ENCODE measurements at regions of chr6 and their contacts with region 1.

Region 1: GRCh38 chr6:70884074-70884983 is 72.5 kb downstream of the B3GAT2 start:
- DNase-seq: peak; percentile 71
- ATAC-seq: peak; percentile 91
- H3K4me3 Mint-ChIP-seq: no peak overlapping the region
- H3K27ac Mint-ChIP-seq: no peak overlapping the region
- H3K4me1 Mint-ChIP-seq: no peaks in the 10 kb centered on the region
- H3K27me3 Mint-ChIP-seq: peaks cover 2% of the 10 kb centered on the region

Region 2: GRCh38 chr6:70310063-70310694 is 574.1 kb before region 1 on chr6:
- CTCF ChIA-PET with region 1: interaction called, 10 read pairs
- POLR2A ChIA-PET with region 1: no interaction called
- DNase-seq: no peak
- ATAC-seq: no peak
- H3K4me3 Mint-ChIP-seq: no peak overlapping the region
- H3K27ac Mint-ChIP-seq: no peak overlapping the region
- H3K4me1 Mint-ChIP-seq: no peaks in the 10 kb centered on the region
- H3K27me3 Mint-ChIP-seq: peaks cover 20% of the 10 kb centered on the region

Region 3: DNA sequence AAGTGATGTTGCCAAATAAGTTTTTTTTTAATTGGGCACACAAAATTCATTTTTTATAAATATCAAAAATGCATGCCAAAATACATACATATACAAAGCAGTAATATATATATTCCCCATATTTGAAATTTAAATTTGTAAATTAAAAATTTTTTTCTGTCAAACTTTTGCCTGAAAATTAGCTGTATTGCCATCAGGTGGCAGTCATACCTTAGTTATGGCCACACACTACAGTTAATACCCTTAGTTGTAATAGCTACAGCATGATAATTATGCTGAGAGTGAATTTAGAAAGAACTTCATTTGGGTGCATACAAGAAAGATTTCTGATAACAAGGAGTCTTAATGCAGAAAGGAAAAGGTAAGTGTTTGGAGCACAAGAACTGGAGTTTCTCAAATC is 363.8 kb before region 1 on chr6:
- CTCF ChIA-PET with region 1: interaction called, 22 read pairs
- POLR2A ChIA-PET with region 1: no interaction called
- DNase-seq: peak; percentile 33
- ATAC-seq: no peak
- H3K4me3 Mint-ChIP-seq: no peak overlapping the region
- H3K27ac Mint-ChIP-seq: no peak overlapping the region
- H3K4me1 Mint-ChIP-seq: peaks cover 7% of the 10 kb centered on the region
- H3K27me3 Mint-ChIP-seq: no peaks in the 10 kb centered on the region

Region 4: DNA sequence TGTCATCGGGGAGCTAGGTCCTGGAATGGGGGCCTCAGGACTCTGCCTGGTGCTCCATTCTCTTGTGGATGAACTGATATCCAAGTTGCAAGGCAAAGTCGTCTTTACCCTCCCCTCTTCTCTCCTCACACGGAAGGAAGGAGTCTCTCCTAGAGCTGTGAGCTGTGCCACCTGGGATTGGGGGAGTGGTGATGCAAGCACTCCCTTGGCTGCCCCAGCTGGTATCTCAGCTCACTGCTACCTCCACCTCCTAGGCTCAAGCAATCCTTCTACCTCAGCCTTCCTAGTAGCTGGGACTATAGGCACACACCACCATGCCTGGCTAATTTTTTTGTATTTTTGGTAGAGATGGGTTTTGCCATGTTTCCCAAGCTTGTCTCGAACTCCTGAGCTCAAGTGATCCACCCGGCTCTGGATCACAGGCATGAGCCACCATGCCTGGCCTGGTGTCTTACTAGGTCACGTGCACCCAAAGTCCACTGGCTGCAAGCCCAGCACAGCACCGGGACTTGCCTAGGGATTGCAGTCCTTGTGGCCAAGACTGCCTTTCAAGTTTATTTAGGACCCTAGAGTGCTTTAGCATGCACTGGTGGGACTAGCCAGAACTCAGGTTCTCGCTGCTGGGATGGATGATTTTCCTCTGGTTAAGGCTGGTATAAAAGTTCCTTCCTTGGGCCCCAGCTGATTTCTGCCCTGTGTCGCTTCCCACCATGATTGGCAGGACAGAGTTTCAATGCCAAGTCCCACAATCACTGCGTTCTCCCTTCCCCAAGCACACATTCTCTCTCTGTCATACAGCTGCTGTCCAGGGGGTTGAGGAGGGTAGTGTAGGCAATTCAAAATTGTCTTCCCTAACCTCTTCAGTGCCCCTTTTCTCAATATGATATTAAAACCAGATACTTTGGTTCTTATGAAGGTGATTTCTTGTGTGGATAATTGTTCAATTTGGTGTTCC is 183.1 kb before region 1 on chr6:
- CTCF ChIA-PET with region 1: interaction called, 14 read pairs
- POLR2A ChIA-PET with region 1: no interaction called
- DNase-seq: no peak
- ATAC-seq: no peak
- H3K4me3 Mint-ChIP-seq: no peak overlapping the region
- H3K27ac Mint-ChIP-seq: no peak overlapping the region
- H3K4me1 Mint-ChIP-seq: no peaks in the 10 kb centered on the region
- H3K27me3 Mint-ChIP-seq: no peaks in the 10 kb centered on the region

Region 5: DNA sequence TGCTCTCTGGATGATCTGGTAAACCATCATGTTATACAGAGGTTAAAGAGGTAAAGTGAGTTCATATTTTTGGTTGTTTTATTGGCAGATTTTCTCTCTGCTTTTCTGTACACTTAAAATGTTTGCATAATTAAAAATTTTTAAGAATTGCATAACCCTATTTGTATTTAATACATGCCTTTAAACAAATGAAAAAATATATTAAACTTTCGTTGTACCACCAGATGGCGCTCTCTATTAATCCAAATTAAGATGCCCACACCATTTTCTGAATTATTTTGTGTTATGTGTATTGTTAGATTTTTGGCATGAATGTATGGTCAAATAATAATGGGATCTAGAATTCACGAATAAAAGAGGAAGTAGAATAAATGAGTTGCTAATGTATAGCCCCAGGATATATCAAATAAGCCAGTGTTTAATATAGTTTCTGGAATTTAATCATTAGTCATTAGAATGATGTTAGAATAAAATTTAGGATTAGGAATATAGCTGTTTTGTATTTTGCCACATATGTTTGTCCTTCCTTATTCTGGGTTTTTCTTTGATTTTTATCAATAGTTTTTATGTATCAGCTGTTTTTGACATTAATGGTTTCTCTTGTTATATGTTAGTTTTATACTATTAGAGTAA is 177.7 kb before region 1 on chr6:
- CTCF ChIA-PET with region 1: interaction called, 79 read pairs
- POLR2A ChIA-PET with region 1: no interaction called
- DNase-seq: peak; percentile 28
- ATAC-seq: no peak
- H3K4me3 Mint-ChIP-seq: no peak overlapping the region
- H3K27ac Mint-ChIP-seq: no peak overlapping the region
- H3K4me1 Mint-ChIP-seq: peaks cover 8% of the 10 kb centered on the region
- H3K27me3 Mint-ChIP-seq: no peaks in the 10 kb centered on the region

Region 6: GRCh38 chr6:70717038-70717801 is 167.1 kb before region 1 on chr6:
- CTCF ChIA-PET with region 1: interaction called, 18 read pairs
- POLR2A ChIA-PET with region 1: no interaction called
- DNase-seq: peak; percentile 32
- ATAC-seq: peak; percentile 76
- H3K4me3 Mint-ChIP-seq: no peak overlapping the region
- H3K27ac Mint-ChIP-seq: peak overlapping the region; percentile 23
- H3K4me1 Mint-ChIP-seq: peaks cover 32% of the 10 kb centered on the region
- H3K27me3 Mint-ChIP-seq: no peaks in the 10 kb centered on the region

Region 7: GRCh38 chr6:70831427-70831826 is 52.9 kb before region 1 on chr6:
- CTCF ChIA-PET with region 1: no interaction called
- POLR2A ChIA-PET with region 1: no interaction called
- DNase-seq: no peak
- ATAC-seq: no peak
- H3K4me3 Mint-ChIP-seq: no peak overlapping the region
- H3K27ac Mint-ChIP-seq: no peak overlapping the region
- H3K4me1 Mint-ChIP-seq: no peaks in the 10 kb centered on the region
- H3K27me3 Mint-ChIP-seq: no peaks in the 10 kb centered on the region

Region 8: GRCh38 chr6:70847106-70848084 is 36.9 kb before region 1 on chr6:
- CTCF ChIA-PET with region 1: interaction called, 10 read pairs
- POLR2A ChIA-PET with region 1: no interaction called
- DNase-seq: no peak
- ATAC-seq: no peak
- H3K4me3 Mint-ChIP-seq: no peak overlapping the region
- H3K27ac Mint-ChIP-seq: no peak overlapping the region
- H3K4me1 Mint-ChIP-seq: no peaks in the 10 kb centered on the region
- H3K27me3 Mint-ChIP-seq: no peaks in the 10 kb centered on the region

Measured in activated CD8-positive, alpha-beta T cell treated with anti-CD3 and anti-CD28 coated beads, Interleukin-2, amount 10 ng/mL, durations not matched to agents 7 days and 5 days (primary cell).